ENCODE measurements at regions of chr2 and their contacts with region 1.

Region 1: DNA sequence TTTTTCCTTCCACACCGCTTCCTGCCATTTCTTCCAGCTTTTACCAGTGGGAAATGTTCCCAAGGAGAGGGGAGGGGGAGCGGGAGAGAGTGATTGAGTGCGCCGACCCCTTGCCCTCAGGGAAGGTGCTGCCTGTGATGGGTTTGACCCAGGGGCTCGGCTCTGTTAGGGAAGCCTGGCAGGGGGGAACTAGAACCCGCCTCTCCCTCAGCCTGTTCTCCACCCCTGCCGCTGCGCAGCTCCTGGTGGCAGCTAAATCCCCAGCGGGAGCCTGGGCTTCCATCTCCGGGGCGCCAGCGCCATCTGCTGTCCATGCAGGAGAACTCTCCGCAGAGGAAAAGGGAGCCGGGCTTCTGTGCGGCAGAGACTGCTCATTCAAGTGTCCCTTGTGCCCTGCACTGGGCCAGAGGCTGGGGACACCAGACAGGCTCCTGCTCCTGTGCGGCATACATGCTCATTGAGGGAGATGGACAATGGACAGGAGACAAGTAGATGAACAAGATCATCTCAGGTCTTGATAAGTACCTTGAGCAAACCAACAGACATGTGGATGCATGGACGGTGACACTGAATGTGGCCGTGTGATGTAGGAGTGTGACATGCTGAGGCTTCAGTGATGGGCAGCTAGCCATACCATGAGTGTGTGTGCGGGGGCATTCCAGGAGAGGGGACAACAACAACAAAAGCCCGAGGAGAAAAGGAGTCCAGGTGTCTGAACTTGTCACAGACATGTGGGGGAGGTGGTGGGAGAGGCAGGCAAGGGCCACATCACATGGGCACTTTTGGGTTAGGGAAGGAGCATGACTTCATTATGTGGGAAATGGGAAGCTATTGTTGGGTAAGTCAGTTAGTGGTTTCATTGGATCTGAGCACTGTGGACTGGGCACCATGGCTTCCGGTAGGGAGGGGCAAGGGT is 13.3 kb downstream of the CHPF start:
- DNase-seq: peak; percentile 82
- ATAC-seq: peak; percentile 97
- H3K4me3 Mint-ChIP-seq: no peak overlapping the region
- H3K27ac Mint-ChIP-seq: no peak overlapping the region
- H3K4me1 Mint-ChIP-seq: no peaks in the 10 kb centered on the region
- H3K27me3 Mint-ChIP-seq: peaks cover 44% of the 10 kb centered on the region
- CTCF ChIP-seq: peak; percentile 96

Region 2: GRCh38 chr2:219362524-219363164 is 167.7 kb before region 1 on chr2:
- CTCF ChIA-PET with region 1: no interaction called
- POLR2A ChIA-PET with region 1: no interaction called
- intact Hi-C with region 1: no loop called
- DNase-seq: peak; percentile 37
- ATAC-seq: peak; percentile 60
- H3K4me3 Mint-ChIP-seq: no peak overlapping the region
- H3K27ac Mint-ChIP-seq: no peak overlapping the region
- H3K4me1 Mint-ChIP-seq: peaks cover 9% of the 10 kb centered on the region
- H3K27me3 Mint-ChIP-seq: peaks cover 16% of the 10 kb centered on the region
- CTCF ChIP-seq: no peak

Region 3: GRCh38 chr2:219388127-219388844 is 142.0 kb before region 1 on chr2:
- CTCF ChIA-PET with region 1: interaction called, 11 read pairs
- POLR2A ChIA-PET with region 1: no interaction called
- intact Hi-C with region 1: no loop called
- DNase-seq: peak; percentile 99
- ATAC-seq: peak; percentile 81
- H3K4me3 Mint-ChIP-seq: peak overlapping the region; percentile 72
- H3K27ac Mint-ChIP-seq: peak overlapping the region; percentile 85
- H3K4me1 Mint-ChIP-seq: peaks cover 21% of the 10 kb centered on the region
- H3K27me3 Mint-ChIP-seq: no peaks in the 10 kb centered on the region
- CTCF ChIP-seq: peak; percentile 58

Region 4: DNA sequence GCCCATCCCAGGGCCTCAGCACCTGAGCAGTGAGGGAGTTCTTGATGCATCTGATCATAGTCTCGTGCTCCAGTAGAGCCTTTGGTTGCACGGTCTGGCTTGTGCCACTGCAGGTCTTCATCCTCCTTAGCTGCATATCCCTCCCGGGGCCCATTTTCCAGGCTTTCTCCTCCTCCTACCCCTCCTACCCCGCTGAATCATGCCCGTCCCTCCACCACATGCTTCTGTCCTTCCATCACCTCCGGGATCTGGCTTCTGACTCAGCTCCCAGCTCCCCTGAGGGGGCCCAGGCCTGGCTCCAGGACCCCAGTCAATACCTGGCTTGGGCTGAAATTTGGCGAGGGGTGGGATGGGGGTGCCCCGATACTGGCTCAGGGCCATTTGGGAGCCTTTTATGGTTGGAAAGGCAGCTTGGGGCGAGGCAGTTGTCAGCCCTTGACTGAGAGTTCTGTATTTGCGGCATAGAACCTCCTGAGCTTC is 77.4 kb before region 1 on chr2:
- CTCF ChIA-PET with region 1: interaction called, 38 read pairs
- POLR2A ChIA-PET with region 1: no interaction called
- intact Hi-C with region 1: no loop called
- DNase-seq: no peak
- ATAC-seq: no peak
- H3K4me3 Mint-ChIP-seq: no peak overlapping the region
- H3K27ac Mint-ChIP-seq: no peak overlapping the region
- H3K4me1 Mint-ChIP-seq: peaks cover 25% of the 10 kb centered on the region
- H3K27me3 Mint-ChIP-seq: peaks cover 8% of the 10 kb centered on the region
- CTCF ChIP-seq: no peak

Region 5: GRCh38 chr2:219475697-219476651 is 54.3 kb before region 1 on chr2:
- CTCF ChIA-PET with region 1: interaction called, 46 read pairs
- POLR2A ChIA-PET with region 1: interaction called, 3 read pairs
- intact Hi-C with region 1: loop called (anchors 5 kb)
- DNase-seq: peak; percentile 84
- ATAC-seq: peak; percentile 96
- H3K4me3 Mint-ChIP-seq: no peak overlapping the region
- H3K27ac Mint-ChIP-seq: no peak overlapping the region
- H3K4me1 Mint-ChIP-seq: peaks cover 2% of the 10 kb centered on the region
- H3K27me3 Mint-ChIP-seq: no peaks in the 10 kb centered on the region
- CTCF ChIP-seq: peak; percentile 75

Region 6: DNA sequence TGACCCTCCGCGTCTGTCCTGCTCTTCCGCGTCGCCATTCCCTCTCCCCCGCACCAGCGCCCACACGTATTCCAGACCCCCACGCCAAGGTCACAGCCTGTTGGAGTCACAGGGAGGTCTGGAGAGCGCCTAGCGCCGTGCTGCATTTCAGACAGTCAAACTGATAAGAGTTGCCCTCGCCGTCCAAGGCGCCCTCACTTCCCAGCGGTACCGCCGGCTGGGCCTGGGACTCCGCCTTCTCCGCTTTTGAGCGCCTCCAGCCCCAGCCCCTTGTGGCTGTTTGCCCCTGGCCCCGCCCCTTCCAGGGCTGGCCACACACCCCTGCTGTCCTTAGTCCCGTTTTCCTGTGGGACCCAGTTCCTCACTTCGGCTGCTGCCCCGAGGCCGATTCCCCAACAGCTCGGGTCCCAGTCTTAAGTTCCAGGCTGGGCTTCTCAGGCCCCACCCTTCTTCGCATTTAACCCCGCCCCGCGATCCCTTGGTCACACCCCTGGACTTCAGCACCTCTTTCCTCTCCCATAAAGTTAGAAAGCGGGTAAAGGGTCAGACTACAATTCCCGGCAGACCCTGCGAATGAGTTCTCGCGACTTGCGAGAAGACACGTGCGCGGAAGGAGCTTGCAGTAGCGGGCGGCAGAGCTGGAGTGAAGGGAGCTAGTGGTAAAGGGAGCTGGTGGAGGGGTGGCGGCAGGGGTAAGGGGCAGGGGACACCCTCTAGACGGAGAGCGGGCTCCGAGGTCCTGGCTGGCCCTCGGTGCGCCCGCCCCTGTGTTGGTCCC is 31.8 kb before region 1 on chr2 and contains the start of gene GMPPA:
- CTCF ChIA-PET with region 1: interaction called, 283 read pairs
- POLR2A ChIA-PET with region 1: interaction called, 4 read pairs
- intact Hi-C with region 1: loop called (anchors 5 kb)
- DNase-seq: peak; percentile 97
- ATAC-seq: peak; percentile 96
- H3K4me3 Mint-ChIP-seq: peak within 1 kb of the TSS; percentile 92
- H3K27ac Mint-ChIP-seq: peak within 1 kb of the TSS; percentile 87
- H3K4me1 Mint-ChIP-seq: peaks cover 34% of the 10 kb centered on the region
- H3K27me3 Mint-ChIP-seq: peaks cover 43% of the 10 kb centered on the region
- CTCF ChIP-seq: no peak
- total RNA-seq, gene GMPPA: 32.4 to 34.2 TPM

Region 7: DNA sequence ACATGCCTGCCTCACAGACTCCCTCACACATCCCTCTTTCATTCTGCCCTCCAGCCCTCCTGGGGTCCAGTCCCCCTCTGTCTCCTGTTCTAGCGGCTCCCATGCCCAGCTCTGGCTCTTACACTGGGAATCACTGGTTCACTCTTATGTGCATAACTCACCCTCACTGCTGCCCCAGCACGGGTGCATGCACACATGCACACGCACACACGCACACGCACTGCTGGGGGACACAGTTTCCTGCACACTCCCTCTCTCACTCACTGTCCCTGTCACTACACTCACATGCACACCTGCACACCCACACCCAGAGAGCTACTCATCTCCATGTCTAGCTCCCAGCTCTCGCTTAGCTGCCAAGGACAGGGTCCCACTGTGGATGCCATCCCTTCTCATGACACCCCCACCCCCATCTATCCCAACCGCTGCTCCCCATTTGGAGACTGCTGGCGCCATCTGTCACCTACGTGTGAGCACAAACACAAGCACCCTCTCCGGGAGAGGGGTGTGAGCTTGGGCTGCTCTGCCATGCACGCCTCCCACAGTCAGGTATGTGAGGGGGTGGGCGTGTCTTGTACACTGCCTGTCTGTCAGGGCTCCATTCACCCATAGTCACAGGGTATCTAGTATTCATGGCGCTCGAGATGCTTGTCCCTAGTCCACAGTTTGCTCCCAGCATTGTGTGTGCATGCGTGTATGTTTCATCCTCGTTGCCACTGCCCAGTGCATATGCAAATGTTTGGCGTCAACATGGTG is 14.3 kb before region 1 on chr2:
- CTCF ChIA-PET with region 1: interaction called, 71 read pairs
- POLR2A ChIA-PET with region 1: interaction called, 3 read pairs
- intact Hi-C with region 1: no loop called
- DNase-seq: no peak
- ATAC-seq: no peak
- H3K4me3 Mint-ChIP-seq: no peak overlapping the region
- H3K27ac Mint-ChIP-seq: no peak overlapping the region
- H3K4me1 Mint-ChIP-seq: peaks cover 7% of the 10 kb centered on the region
- H3K27me3 Mint-ChIP-seq: peaks cover 70% of the 10 kb centered on the region
- CTCF ChIP-seq: no peak

Measured in activated CD8-positive, alpha-beta T cell treated with anti-CD3 and anti-CD28 coated beads for 36 hours (primary cell).